BJ (cell line): ENCODE measurements at regions of chr9 and their contacts with region 1.

Region 1: GRCh38 chr9:132182314-132183091 is 20.6 kb downstream of the NTNG2 start:
- DNase-seq: no peak
- H3K4me3 ChIP-seq: no peak overlapping the region
- H3K27me3 ChIP-seq: peaks cover 42% of the 10 kb centered on the region
- CTCF ChIP-seq: peak; percentile 20; the same call in 1 of the 2 replicates

Region 2: DNA sequence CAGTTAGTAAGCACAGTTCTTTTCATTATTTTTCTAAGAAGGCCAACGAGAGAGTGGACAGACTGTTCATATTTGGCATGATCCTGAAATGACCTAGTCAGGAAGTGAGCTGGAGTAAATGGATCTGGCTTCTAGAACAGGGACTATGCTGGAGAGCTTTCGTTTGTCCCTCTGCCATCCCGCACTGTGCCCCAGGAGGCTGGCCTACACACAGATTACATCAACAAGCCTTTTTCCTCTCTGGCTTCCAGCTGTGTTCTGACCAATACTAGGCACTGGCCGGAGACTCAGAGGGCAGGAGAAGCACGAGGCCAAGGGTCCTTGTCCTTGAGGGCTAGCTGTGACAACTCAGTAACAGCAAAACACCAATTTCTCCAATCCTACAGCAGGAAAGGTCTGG is 230.6 kb before region 1 on chr9:
- CTCF ChIA-PET with region 1: no interaction called
- POLR2A ChIA-PET with region 1: interaction called, 27 read pairs
- DNase-seq: peak; percentile 9
- H3K4me3 ChIP-seq: no peak overlapping the region
- H3K27me3 ChIP-seq: no peaks in the 10 kb centered on the region
- CTCF ChIP-seq: no peak

Region 3: GRCh38 chr9:132169672-132170392 is 12.7 kb before region 1 on chr9:
- CTCF ChIA-PET with region 1: interaction called, 15 read pairs
- POLR2A ChIA-PET with region 1: no interaction called
- DNase-seq: no peak
- H3K4me3 ChIP-seq: no peak overlapping the region
- H3K27me3 ChIP-seq: peaks cover 23% of the 10 kb centered on the region
- CTCF ChIP-seq: peak; percentile 86